MCF 10A (cell line): ENCODE measurements at regions of chr1 and their contacts with region 1.

Region 1: GRCh38 chr1:159780583-159781582 is at the start of gene DUSP23:
- DNase-seq: peak; percentile 100
- H3K4me3 Mint-ChIP-seq: peak within 1 kb of the TSS; percentile 87
- H3K27ac Mint-ChIP-seq: peak within 1 kb of the TSS; percentile 71
- H3K4me1 Mint-ChIP-seq: peaks cover 65% of the 10 kb centered on the region
- H3K27me3 Mint-ChIP-seq: no peaks in the 10 kb centered on the region
- CTCF ChIP-seq: peak; percentile 97
- total RNA-seq, gene DUSP23: 119 and 178 TPM in 2 replicates

Region 2: GRCh38 chr1:159197561-159198557 is 583.0 kb before region 1 on chr1:
- CTCF ChIA-PET with region 1: interaction called, 92 read pairs
- POLR2A ChIA-PET with region 1: interaction called, 7 read pairs
- intact Hi-C with region 1: loop called (anchors 1 kb)
- DNase-seq: peak; percentile 88
- H3K4me3 Mint-ChIP-seq: no peak overlapping the region
- H3K27ac Mint-ChIP-seq: no peak overlapping the region
- H3K4me1 Mint-ChIP-seq: peaks cover 32% of the 10 kb centered on the region
- H3K27me3 Mint-ChIP-seq: no peaks in the 10 kb centered on the region
- CTCF ChIP-seq: peak; percentile 95

Region 3: DNA sequence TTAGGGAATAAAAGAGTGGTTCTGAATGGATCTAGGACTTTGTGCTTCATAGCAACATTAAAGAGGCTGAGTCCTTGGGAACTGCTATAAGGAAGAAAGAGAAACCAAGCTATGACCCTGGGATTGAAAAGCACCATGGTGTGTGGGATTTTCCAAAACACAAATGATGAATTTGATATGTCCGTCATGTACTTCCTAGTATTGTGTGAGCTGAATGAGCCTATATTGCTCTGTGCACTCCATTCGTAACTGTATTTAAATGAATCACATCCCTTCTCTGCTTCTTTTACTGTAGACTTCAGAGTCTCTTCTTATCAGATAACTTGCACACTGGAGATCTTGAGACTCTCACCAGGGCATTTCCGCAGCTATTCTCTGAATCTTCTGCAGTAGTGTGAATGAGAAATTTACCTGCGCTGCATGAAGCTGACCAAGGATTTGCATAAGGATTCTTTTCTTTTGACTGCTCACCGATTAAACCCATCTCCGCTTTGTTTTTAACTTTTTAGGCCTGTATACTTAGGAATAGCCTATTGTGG is 372.0 kb before region 1 on chr1:
- CTCF ChIA-PET with region 1: no interaction called
- POLR2A ChIA-PET with region 1: no interaction called
- intact Hi-C with region 1: loop called (anchors 10 kb)
- DNase-seq: no peak
- H3K4me3 Mint-ChIP-seq: no peak overlapping the region
- H3K27ac Mint-ChIP-seq: no peak overlapping the region
- H3K4me1 Mint-ChIP-seq: no peaks in the 10 kb centered on the region
- H3K27me3 Mint-ChIP-seq: no peaks in the 10 kb centered on the region
- CTCF ChIP-seq: no peak

Region 4: DNA sequence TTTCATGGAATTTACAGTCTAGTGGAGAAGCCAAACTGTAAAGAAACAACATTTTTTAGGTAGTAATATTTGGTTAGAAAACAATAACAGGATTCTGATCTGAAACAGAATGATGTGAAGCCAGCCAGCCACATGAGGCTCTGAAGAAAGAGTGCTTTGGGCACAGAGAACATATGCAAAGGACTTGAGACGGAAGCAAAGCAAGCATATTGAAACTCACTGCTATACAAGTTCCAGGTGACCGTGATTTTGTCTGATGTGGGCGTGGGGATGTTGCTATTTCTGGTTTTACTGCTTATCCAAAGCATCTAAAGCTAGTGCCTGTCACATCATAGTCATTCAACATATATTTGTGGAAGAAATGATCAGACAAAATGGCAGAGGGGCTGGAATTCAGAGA is 81.2 kb before region 1 on chr1:
- CTCF ChIA-PET with region 1: no interaction called
- POLR2A ChIA-PET with region 1: no interaction called
- intact Hi-C with region 1: no loop called
- DNase-seq: no peak
- H3K4me3 Mint-ChIP-seq: no peak overlapping the region
- H3K27ac Mint-ChIP-seq: peak overlapping the region; percentile 1
- H3K4me1 Mint-ChIP-seq: peaks cover 8% of the 10 kb centered on the region
- H3K27me3 Mint-ChIP-seq: no peaks in the 10 kb centered on the region
- CTCF ChIP-seq: no peak

Region 5: DNA sequence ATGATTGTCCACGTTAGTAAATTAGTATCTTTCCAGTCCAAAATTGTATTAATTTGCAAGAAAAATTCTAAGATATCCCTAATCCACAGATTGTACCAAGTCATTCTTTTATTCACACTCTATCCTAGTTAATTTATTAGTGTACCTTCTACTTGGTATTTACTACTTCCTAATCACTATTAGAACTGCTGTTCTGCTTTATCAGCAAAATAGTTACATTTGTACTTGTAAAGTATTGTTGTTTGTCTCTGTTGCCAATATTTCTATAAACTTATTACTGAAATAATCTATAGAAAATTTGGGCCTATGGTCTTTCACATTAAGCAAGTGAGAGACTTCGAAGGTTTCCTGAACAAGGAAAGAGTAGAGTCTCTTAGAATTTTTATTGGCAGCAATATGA is 60.9 kb before region 1 on chr1:
- CTCF ChIA-PET with region 1: no interaction called
- POLR2A ChIA-PET with region 1: no interaction called
- intact Hi-C with region 1: no loop called
- DNase-seq: no peak
- H3K4me3 Mint-ChIP-seq: no peak overlapping the region
- H3K27ac Mint-ChIP-seq: no peak overlapping the region
- H3K4me1 Mint-ChIP-seq: no peaks in the 10 kb centered on the region
- H3K27me3 Mint-ChIP-seq: no peaks in the 10 kb centered on the region
- CTCF ChIP-seq: no peak

Region 6: GRCh38 chr1:159854693-159855192 is 73.9 kb after region 1 on chr1:
- CTCF ChIA-PET with region 1: interaction called, 10 read pairs
- POLR2A ChIA-PET with region 1: interaction called, 7 read pairs
- intact Hi-C with region 1: loop called (anchors 5 kb)
- DNase-seq: peak; percentile 88
- H3K4me3 Mint-ChIP-seq: peak overlapping the region; percentile 77
- H3K27ac Mint-ChIP-seq: peak overlapping the region; percentile 61
- H3K4me1 Mint-ChIP-seq: peaks cover 29% of the 10 kb centered on the region
- H3K27me3 Mint-ChIP-seq: no peaks in the 10 kb centered on the region
- CTCF ChIP-seq: no peak

Region 7: DNA sequence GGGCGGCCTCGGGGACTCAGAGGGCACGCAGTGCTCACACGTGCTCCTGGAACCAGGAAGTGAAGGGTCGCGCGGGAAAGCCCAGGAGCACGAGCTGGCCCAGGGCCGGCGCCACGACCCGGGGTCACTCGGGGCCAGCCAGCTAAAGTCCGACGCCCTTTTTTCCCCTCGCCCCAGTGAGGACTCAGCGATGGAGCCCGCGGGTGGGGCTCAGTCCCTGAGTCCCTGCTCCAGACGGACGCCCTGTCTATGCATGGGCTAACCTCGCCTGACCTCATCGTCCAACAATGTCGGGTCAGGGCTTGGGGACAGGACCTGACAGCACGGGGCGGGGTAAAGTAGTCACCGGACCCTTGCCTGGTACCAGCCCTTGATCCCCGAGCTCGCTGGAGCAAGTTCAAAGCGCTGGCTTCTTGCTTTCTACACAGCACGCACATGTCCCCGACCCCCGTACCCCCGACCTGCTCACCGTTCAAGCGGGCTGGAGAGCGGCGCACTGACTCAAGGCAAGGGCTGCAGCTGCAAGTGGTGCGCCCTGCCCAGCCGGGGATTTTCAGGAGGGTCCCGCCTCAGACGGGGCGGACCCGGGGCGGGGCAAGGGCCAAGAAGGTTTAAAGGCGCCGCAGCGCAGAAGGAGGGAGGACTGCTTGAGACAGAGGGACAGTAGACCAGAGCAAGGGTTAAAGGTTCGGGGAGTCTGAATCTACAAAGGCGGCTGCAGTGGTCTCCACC is 144.3 kb after region 1 on chr1 and contains the start of gene TAGLN2:
- CTCF ChIA-PET with region 1: no interaction called
- POLR2A ChIA-PET with region 1: interaction called, 12 read pairs
- intact Hi-C with region 1: loop called (anchors 1 kb)
- DNase-seq: peak; percentile 97
- H3K4me3 Mint-ChIP-seq: peak within 1 kb of the TSS; percentile 81
- H3K27ac Mint-ChIP-seq: peak within 1 kb of the TSS; percentile 99
- H3K4me1 Mint-ChIP-seq: peaks cover 44% of the 10 kb centered on the region
- H3K27me3 Mint-ChIP-seq: no peaks in the 10 kb centered on the region
- CTCF ChIP-seq: no peak
- total RNA-seq, gene TAGLN2: 464 and 483 TPM in 2 replicates